ENCODE measurements at regions of chr5 and their contacts with region 1.

Region 1: DNA sequence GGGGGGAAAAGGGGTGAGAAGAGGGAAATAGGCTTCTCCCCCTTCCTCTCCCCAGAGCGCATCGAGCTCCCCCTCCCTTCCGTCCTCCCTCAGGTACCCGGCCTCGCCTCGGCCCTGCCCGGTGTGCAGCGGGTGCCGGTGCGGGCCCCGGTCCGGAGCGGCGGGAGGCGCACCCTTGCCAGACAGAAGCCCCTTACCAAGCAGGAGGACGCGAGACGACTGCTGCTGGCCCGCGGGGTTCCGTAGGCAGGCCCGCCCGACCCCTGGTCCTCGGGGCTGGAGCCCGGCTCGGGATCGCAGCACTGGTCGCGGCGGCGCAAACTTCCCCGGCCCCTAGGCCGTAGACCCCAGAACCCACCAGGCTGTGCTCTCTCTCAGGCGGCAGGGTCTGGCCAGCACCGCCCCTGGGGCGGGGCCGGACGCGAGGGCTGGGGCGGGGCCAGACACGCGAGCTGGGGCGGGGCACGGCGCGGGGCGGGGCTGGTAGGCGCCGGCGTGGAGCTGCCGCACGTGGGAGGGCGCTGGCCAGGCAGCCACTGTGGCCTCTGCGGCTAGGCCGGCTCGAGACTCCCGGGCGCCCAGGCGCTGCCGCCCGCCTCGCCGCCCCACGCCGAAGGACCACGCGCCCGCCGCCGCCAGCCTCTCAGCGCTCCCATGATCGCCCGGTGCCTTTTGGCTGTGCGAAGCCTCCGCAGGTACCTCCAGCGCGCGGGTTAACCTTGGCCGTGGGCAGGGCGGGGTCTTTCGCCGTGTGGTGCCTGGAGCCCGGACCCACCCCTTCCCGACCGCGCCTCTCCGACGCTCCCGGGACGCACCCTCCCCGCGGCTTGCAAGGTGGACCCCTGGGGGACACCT is at the starts of genes NLN and SGTB:
- DNase-seq: peak; percentile 70 to 92 (median 82)
- ATAC-seq: peak; percentile 86
- H3K4me3 ChIP-seq: peak within 1 kb of the TSS; percentile 88
- H3K4me3 Mint-ChIP-seq: peak within 1 kb of the TSS; percentile 95
- H3K27ac ChIP-seq: peak within 1 kb of the TSS; percentile 83 to 97
- H3K27ac Mint-ChIP-seq: peak within 1 kb of the TSS; percentile 86
- H3K4me1 ChIP-seq: peaks cover 32% of the 10 kb centered on the region
- H3K4me1 Mint-ChIP-seq: peaks cover 26% of the 10 kb centered on the region
- H3K27me3 ChIP-seq: no peaks in the 10 kb centered on the region
- H3K27me3 Mint-ChIP-seq: no peaks in the 10 kb centered on the region
- CTCF ChIP-seq: no peak
- total RNA-seq, gene NLN: 1.4 to 2.5 TPM
- total RNA-seq, gene SGTB: 84.2 to 93.7 TPM

Region 2: GRCh38 chr5:65290677-65291076 is 431.3 kb before region 1 on chr5:
- CTCF ChIA-PET with region 1: no interaction called
- POLR2A ChIA-PET with region 1: no interaction called
- intact Hi-C with region 1: no loop called
- DNase-seq: no peak
- ATAC-seq: no peak
- H3K4me3 ChIP-seq: no peak overlapping the region
- H3K4me3 Mint-ChIP-seq: no peak overlapping the region
- H3K27ac ChIP-seq: no peak overlapping the region
- H3K27ac Mint-ChIP-seq: no peak overlapping the region
- H3K4me1 ChIP-seq: no peaks in the 10 kb centered on the region
- H3K4me1 Mint-ChIP-seq: no peaks in the 10 kb centered on the region
- H3K27me3 ChIP-seq: no peaks in the 10 kb centered on the region
- H3K27me3 Mint-ChIP-seq: no peaks in the 10 kb centered on the region
- CTCF ChIP-seq: no peak

Region 3: GRCh38 chr5:65611524-65611923 is 110.4 kb before region 1 on chr5:
- CTCF ChIA-PET with region 1: no interaction called
- POLR2A ChIA-PET with region 1: no interaction called
- intact Hi-C with region 1: no loop called
- DNase-seq: no peak
- ATAC-seq: no peak
- H3K4me3 ChIP-seq: no peak overlapping the region
- H3K4me3 Mint-ChIP-seq: no peak overlapping the region
- H3K27ac ChIP-seq: no peak overlapping the region
- H3K27ac Mint-ChIP-seq: no peak overlapping the region
- H3K4me1 ChIP-seq: no peaks in the 10 kb centered on the region
- H3K4me1 Mint-ChIP-seq: peaks cover 10% of the 10 kb centered on the region
- H3K27me3 ChIP-seq: no peaks in the 10 kb centered on the region
- H3K27me3 Mint-ChIP-seq: no peaks in the 10 kb centered on the region
- CTCF ChIP-seq: no peak

Region 4: DNA sequence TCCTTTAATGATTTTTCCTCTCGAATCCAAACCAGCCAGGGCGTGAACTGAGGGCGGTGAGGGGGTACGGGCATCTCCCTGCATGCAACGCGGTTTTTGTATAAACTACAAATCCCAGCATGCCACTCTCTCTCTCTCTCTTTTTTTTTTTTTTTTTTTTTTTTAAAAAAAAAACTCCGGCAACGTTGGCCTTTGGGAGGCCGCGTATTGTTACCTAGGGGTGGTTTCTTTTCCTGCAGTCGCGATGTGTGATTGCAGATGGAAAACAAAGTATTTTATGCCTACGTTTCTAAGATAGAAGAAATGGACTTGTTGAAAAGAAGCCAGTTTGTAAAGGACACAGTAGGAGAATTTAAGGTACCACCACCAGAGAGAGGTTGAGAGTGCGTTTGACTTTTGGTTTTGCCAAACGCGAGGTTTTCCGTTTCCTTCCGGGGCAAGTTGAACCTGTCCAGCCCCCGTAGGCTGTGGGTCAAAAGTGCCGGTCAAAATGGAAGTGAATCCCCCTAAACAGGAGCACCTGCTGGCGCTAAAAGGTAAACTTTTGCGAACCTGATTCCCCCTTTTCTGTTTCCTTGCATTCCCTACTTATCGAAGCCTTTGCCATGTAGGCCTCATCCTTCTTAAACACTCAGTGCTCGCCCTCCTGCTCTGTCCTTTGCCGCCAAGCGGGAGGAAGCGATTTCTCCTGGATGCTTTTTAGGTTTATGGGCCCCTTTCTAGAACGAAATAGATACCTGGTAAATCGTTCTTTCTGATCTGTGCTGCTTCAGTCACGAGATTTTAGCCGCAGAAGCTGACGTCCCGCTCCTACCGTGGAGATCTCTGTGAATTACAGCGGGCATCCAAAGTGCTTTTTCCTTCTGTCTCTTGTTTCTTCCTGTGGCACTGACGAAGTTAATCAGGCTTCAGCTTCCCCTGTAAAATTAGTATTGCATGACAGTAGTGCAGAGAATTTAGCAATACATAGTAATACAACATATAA is 97.1 kb before region 1 on chr5 and contains the starts of genes SHLD3 and TRAPPC13:
- CTCF ChIA-PET with region 1: no interaction called
- POLR2A ChIA-PET with region 1: interaction called, 10 read pairs
- intact Hi-C with region 1: loop called (anchors 1 to 2 kb)
- DNase-seq: peak; percentile 67 to 94 (median 76)
- ATAC-seq: peak; percentile 72
- H3K4me3 ChIP-seq: peak within 1 kb of the TSS; percentile 67
- H3K4me3 Mint-ChIP-seq: peak within 1 kb of the TSS; percentile 99
- H3K27ac ChIP-seq: peak within 1 kb of the TSS; percentile 85 to 87
- H3K27ac Mint-ChIP-seq: peak within 1 kb of the TSS; percentile 99
- H3K4me1 ChIP-seq: peaks cover 29% of the 10 kb centered on the region
- H3K4me1 Mint-ChIP-seq: peaks cover 63% of the 10 kb centered on the region
- H3K27me3 ChIP-seq: no peaks in the 10 kb centered on the region
- H3K27me3 Mint-ChIP-seq: no peaks in the 10 kb centered on the region
- CTCF ChIP-seq: peak; percentile 29
- total RNA-seq, gene SHLD3: 11.5 to 11.7 TPM
- total RNA-seq, gene TRAPPC13: 11.2 to 14.4 TPM

Region 5: DNA sequence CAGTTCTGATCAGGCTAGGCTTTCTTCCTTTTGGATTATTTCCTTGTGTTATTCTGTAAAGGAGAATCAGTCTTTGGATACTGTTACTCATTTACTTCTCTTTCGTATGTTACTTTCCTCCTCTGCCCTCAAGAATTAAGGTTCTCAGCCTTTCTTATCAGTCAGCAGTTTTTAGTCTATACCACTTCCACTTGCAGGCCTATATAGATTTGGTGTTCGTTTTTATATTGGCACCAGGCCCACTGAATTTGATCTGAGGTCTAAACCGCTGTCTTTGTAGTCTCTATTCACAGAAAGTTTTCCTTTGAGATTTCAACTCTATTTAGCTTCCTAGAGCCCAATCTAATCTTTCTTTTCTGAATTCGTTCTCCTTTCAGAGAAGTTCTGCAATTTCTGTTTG is 267.2 kb after region 1 on chr5:
- CTCF ChIA-PET with region 1: no interaction called
- POLR2A ChIA-PET with region 1: no interaction called
- intact Hi-C with region 1: no loop called
- DNase-seq: no peak
- ATAC-seq: no peak
- H3K4me3 ChIP-seq: no peak overlapping the region
- H3K4me3 Mint-ChIP-seq: peak overlapping the region; percentile 40
- H3K27ac ChIP-seq: no peak overlapping the region
- H3K27ac Mint-ChIP-seq: peak overlapping the region; percentile 83
- H3K4me1 ChIP-seq: peaks cover 5% of the 10 kb centered on the region
- H3K4me1 Mint-ChIP-seq: peaks cover 44% of the 10 kb centered on the region
- H3K27me3 ChIP-seq: no peaks in the 10 kb centered on the region
- H3K27me3 Mint-ChIP-seq: no peaks in the 10 kb centered on the region
- CTCF ChIP-seq: no peak